ENCODE measurements at regions of chr5 and their contacts with region 1.

Region 1: DNA sequence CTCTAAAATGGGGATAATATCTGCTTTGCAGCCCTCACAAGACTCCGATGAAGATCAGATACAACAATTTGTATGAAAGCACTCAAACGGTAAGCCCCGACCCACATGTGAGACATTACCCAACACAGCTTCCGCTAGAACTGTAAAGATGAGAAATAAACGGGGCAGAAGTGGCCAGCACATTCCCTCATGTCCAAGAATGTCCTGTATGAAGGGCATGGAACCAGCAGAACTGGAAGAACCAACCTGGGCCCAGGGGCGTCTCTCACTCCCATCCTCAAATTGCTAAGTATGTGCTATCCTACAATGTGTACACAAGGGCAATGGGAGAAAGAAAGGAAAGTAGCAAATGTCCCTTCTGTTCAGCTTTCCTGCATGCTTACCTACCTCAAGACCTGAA is 33.0 kb downstream of the CCDC125 start:
- DNase-seq: no peak
- CTCF ChIP-seq: no peak

Region 2: GRCh38 chr5:69288688-69289087 is 10.9 kb before region 1 on chr5:
- CTCF ChIA-PET with region 1: interaction called, 10 read pairs
- POLR2A ChIA-PET with region 1: no interaction called
- DNase-seq: no peak
- CTCF ChIP-seq: no peak

Region 3: GRCh38 chr5:69350664-69351063 is 51.0 kb after region 1 on chr5:
- CTCF ChIA-PET with region 1: no interaction called
- POLR2A ChIA-PET with region 1: no interaction called
- DNase-seq: no peak
- CTCF ChIP-seq: no peak